ENCODE measurements at regions of chr10 and their contacts with region 1.

Region 1: GRCh38 chr10:97686962-97687784 is at the start of gene AVPI1:
- DNase-seq: peak; percentile 97
- ATAC-seq: peak; percentile 84
- H3K4me3 ChIP-seq: peak within 1 kb of the TSS; percentile 92
- H3K27ac ChIP-seq: peak within 1 kb of the TSS; percentile 69
- H3K4me1 ChIP-seq: peaks cover 59% of the 10 kb centered on the region
- H3K27me3 ChIP-seq: no peaks in the 10 kb centered on the region
- CTCF ChIP-seq: no peak
- total RNA-seq, gene AVPI1: 40.7 and 44.5 TPM in 2 replicates

Region 2: DNA sequence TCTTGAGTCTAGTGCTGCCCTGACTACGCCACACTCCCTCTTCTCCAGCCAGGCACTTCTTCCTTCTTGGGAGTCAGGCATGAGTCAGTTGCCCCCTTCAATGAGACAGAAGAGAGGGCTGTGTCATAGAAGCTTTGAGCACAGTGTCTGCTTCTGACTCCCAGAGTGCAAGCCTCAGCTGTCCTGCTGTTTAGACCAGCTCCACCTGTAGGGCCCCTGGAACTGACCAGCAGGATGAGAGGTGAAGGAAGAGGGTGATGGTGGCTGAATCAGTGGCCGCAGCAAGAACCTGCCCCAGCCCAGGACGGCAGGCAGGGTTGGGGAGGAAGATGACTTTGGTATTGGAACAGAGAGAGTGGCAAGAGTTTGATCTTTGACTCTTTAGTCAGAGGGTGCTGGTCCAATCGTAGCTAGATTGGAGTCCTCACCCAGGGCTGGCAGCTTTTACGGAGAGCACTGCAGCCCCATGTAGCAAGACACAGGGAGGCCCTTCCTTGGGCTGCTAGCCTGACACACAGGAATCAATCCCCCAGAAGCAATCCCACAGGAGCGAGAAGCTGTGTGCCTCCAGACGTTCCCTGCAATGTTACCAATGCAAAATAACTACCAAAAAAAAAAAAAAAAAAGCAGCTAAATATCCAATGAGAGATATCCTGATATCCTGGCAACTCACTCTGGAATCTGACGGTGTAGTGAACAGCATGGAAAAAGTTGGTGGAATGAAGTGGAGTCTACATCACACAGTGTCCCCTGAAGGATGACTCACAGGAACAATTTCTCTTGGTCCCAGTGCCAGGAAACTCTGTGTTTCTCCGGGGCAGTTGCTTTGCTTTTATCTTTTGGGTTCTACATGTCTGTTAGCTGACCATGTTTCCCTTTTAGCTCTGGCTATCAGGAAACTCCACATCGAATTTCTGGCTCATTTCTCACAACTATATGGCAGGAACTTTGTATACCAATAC is 90.8 kb before region 1 on chr10:
- CTCF ChIA-PET with region 1: no interaction called
- POLR2A ChIA-PET with region 1: interaction called, 36 read pairs
- intact Hi-C with region 1: no loop called
- DNase-seq: peak; percentile 69
- ATAC-seq: peak; percentile 84
- H3K4me3 ChIP-seq: no peak overlapping the region
- H3K27ac ChIP-seq: peak overlapping the region; percentile 67
- H3K4me1 ChIP-seq: peaks cover 26% of the 10 kb centered on the region
- H3K27me3 ChIP-seq: no peaks in the 10 kb centered on the region
- CTCF ChIP-seq: no peak

Region 3: GRCh38 chr10:97648562-97649404 is 38.4 kb before region 1 on chr10:
- CTCF ChIA-PET with region 1: no interaction called
- POLR2A ChIA-PET with region 1: no interaction called
- intact Hi-C with region 1: loop called (anchors 5 kb)
- DNase-seq: peak; percentile 91
- ATAC-seq: peak; percentile 95
- H3K4me3 ChIP-seq: peak overlapping the region; percentile 46
- H3K27ac ChIP-seq: peak overlapping the region; percentile 84
- H3K4me1 ChIP-seq: peaks cover 61% of the 10 kb centered on the region
- H3K27me3 ChIP-seq: no peaks in the 10 kb centered on the region
- CTCF ChIP-seq: no peak